Prostate gland (tissue), 2 donors: ENCODE measurements at regions of chr22 and their contacts with region 1.

Region 1: DNA sequence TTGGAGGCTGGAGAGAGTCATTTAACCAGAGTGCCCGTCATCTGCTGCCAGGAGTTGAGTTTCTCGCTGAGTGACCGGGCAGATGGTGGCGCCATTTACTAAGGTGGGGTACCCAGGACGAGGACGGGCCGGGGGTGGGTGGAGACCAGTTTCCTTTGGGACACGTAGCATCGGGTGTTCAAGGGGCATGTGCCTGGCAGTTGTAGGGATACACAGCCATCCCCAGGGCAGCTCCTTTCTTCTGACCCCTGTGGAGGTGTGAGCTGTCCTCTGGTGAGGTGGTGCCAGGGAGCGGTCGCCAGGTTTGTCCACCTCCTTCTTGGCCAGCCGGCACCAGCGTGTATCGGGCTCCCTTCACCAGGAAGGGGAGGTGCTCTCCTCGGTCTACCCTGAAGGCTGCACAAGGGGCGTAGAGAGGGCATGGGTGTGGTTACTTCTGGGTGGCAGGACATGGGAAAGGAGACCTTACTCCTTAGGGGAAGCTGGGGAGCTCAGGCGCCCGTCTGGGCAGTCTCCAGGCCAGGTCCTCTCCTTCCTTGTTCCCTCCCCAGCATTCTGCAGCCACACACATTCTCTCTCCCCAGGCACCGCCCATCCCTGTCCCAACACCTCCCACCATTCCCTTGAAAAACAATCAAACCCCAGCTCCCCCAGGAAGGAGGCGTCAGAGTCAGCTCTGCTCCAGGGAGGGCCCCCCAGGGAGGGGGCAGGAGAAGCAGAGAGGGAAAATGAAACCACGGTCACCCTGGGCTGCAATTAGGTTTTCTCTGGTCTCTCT is 10.3 kb upstream of the MB start:
- DNase-seq: peak; percentile 89
- H3K4me3 ChIP-seq: peak overlapping the region; percentile 50
- H3K27ac ChIP-seq: peak overlapping the region; percentile 84 to 92
- H3K4me1 ChIP-seq: peaks cover 2% of the 10 kb centered on the region
- H3K27me3 ChIP-seq: no peaks in the 10 kb centered on the region
- CTCF ChIP-seq: peak; percentile 25 to 76 (median 64)
- POLR2A ChIP-seq: peak; percentile 31

Region 2: GRCh38 chr22:35350539-35351503 is 276.6 kb before region 1 on chr22:
- intact Hi-C with region 1: loop called (anchors 2 kb)
- DNase-seq: peak; percentile 91
- H3K4me3 ChIP-seq: peak overlapping the region; percentile 30 to 40
- H3K27ac ChIP-seq: peak overlapping the region; percentile 53 to 59
- H3K4me1 ChIP-seq: peaks cover 4% of the 10 kb centered on the region
- H3K27me3 ChIP-seq: no peaks in the 10 kb centered on the region
- CTCF ChIP-seq: peak; percentile 51 to 99 (median 92)
- POLR2A ChIP-seq: peak; percentile 66

Region 3: GRCh38 chr22:35739076-35739930 is 111.8 kb after region 1 on chr22:
- intact Hi-C with region 1: no loop called
- DNase-seq: no peak
- H3K4me3 ChIP-seq: no peak overlapping the region
- H3K27ac ChIP-seq: no peak overlapping the region
- H3K4me1 ChIP-seq: no peaks in the 10 kb centered on the region
- H3K27me3 ChIP-seq: no peaks in the 10 kb centered on the region
- CTCF ChIP-seq: no peak
- POLR2A ChIP-seq: no peak

Region 4: DNA sequence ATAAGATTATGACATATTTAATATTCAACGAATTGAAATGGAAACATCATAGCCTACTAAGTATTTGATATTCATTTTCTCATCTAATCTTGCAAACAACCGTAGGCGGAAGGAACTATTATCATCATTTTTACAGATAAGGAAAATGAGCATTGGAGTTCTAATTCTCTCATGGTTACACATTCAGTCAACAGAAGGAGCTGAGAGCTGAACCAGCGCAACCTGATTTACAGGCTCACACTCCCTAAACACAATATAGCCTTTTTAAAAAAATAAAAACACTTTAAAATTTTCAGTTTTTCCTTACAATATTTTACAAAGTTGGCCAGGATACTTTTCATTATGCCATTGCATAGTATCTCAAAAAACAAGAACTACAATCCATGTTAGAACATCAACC is 165.1 kb after region 1 on chr22:
- intact Hi-C with region 1: no loop called
- DNase-seq: peak; percentile 18
- H3K4me3 ChIP-seq: no peak overlapping the region
- H3K27ac ChIP-seq: no peak overlapping the region
- H3K4me1 ChIP-seq: no peaks in the 10 kb centered on the region
- H3K27me3 ChIP-seq: no peaks in the 10 kb centered on the region
- CTCF ChIP-seq: no peak
- POLR2A ChIP-seq: no peak

Region 5: GRCh38 chr22:35840302-35840739 is 212.9 kb after region 1 on chr22:
- intact Hi-C with region 1: loop called (anchors 5 kb)
- DNase-seq: peak; percentile 82
- H3K4me3 ChIP-seq: peak overlapping the region; percentile 36 to 46
- H3K27ac ChIP-seq: peak overlapping the region; percentile 79
- H3K4me1 ChIP-seq: peaks cover 3% of the 10 kb centered on the region
- H3K27me3 ChIP-seq: no peaks in the 10 kb centered on the region
- CTCF ChIP-seq: peak in 1 of 4 experiments; percentile 11
- POLR2A ChIP-seq: peak; percentile 39

Region 6: DNA sequence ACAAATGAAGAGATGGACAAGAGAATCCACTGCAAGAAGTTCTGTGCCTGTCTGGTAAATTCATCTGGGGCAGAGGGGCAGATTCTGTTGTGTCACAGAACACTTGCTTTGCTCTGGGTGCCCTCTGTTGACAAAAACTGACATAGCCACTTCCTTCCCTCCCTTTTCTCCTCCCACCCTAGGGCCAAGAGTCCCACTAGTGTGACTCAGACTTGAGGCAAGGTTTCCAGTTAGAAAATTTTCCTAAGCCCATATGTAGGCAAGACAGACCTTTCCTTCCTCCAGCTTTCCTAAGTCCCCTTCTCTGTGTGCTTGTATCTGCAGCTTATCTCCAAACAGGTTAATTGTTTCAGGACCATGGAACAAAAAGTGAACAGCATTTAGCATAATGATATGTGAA is 294.3 kb after region 1 on chr22:
- intact Hi-C with region 1: loop called (anchors 2 kb)
- DNase-seq: peak; percentile 59
- H3K4me3 ChIP-seq: no peak overlapping the region
- H3K27ac ChIP-seq: no peak overlapping the region
- H3K4me1 ChIP-seq: peaks cover 6% of the 10 kb centered on the region
- H3K27me3 ChIP-seq: no peaks in the 10 kb centered on the region
- CTCF ChIP-seq: peak in 3 of 4 experiments; percentile 45 to 62 (median 59)
- POLR2A ChIP-seq: no peak

Region 7: DNA sequence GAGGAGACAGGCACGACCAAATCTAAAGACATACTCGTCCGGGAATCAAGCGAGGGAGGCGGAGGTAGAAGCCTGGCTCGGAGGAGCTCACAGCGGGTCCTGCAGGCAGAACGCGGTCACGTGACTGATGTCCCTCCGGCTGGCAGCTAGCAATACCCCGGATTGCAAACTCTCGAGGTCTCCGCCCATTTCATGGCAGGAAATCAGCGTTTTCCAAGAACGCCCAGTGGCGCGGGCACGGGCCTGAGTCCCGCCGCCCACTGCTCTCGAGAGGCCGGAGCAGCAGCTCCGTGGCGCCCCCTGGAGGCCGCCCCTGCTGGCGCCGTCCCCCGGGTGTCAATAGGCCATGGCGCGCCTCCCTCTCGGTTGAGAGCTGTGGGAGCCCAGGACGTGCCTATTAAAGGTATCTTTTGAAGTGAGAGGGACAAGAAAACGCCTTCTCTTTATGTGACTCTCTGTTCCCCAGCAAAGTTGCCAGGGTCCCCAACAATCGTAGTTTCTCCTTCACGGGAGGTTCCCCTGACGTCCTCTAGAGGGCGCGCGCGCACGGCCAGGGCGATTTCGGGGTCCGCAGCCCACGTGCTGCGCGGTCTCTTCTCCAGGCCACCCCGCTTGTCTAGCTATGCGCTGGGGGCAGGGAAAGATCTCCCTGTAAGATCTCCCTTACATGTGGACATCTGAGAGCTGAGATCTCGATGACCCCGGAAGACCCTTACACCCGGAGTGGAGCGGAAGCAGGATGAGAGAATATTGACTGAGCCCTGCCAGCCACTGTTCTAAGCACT is 438.5 kb after region 1 on chr22:
- intact Hi-C with region 1: loop called (anchors 5 kb)
- DNase-seq: peak; percentile 87
- H3K4me3 ChIP-seq: peak overlapping the region; percentile 38 to 42
- H3K27ac ChIP-seq: peak overlapping the region; percentile 75 to 92
- H3K4me1 ChIP-seq: no peaks in the 10 kb centered on the region
- H3K27me3 ChIP-seq: no peaks in the 10 kb centered on the region
- CTCF ChIP-seq: peak; percentile 99 to 100 (median 100)
- POLR2A ChIP-seq: peak; percentile 20

Region 8: GRCh38 chr22:36123673-36124630 is 496.5 kb after region 1 on chr22:
- intact Hi-C with region 1: loop called (anchors 1 kb)
- DNase-seq: peak; percentile 95
- H3K4me3 ChIP-seq: no peak overlapping the region
- H3K27ac ChIP-seq: peak overlapping the region; percentile 83 to 87
- H3K4me1 ChIP-seq: no peaks in the 10 kb centered on the region
- H3K27me3 ChIP-seq: no peaks in the 10 kb centered on the region
- CTCF ChIP-seq: peak; percentile 95 to 100 (median 100)
- POLR2A ChIP-seq: peak; percentile 56